ENCODE measurements at regions of chr2 and their contacts with region 1.

Region 1: GRCh38 chr2:224982910-224983711 is 59.2 kb downstream of the DOCK10 start:
- DNase-seq: peak in 1 of 2 donors; percentile 58
- ATAC-seq: peak; percentile 63
- H3K4me3 ChIP-seq: peak overlapping the region; percentile 81 to 94
- H3K27ac ChIP-seq: peak overlapping the region; percentile 88 to 89
- H3K4me1 ChIP-seq: peaks cover 0 to 2% of the 10 kb centered on the region in 2 donors
- H3K27me3 ChIP-seq: no peaks in the 10 kb centered on the region

Region 2: DNA sequence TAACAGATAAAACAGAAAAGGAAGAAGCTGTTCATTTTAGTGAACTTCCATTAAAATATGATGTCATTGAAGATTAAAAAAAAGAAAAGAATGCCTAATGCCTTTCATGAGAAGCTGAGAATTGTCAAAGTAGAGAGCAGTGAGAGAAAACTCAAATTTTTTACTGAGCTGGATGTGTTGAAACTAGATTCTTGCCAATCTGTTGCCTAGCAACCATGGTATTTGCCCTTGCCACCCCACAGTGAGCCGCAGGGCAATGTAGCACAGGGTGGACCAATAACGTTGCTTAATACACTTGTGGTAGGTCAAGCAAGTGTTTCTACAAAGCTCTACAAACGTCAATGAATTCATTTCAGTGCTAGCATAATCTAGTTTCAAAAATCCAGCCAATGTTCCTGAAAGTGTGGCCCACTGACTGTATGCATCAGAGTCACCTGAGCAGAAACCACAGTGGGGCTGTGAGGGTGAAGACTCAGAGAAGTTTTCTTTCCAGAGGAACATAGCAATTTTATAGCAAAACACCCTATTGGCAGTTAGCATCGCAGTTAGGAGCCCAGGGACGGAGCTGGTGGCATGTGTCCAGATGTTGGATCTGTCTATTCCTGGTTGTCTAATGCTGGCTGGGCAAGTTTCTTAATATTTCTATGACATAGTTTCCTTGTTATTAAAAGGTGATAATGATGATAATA is 73.1 kb before region 1 on chr2:
- intact Hi-C with region 1: loop called in 1 of 2 experiments (anchors 5 kb)
- DNase-seq: peak; percentile 76 to 84
- ATAC-seq: peak; percentile 92
- H3K4me3 ChIP-seq: no peak overlapping the region
- H3K27ac ChIP-seq: peak overlapping the region; percentile 85 to 90
- H3K4me1 ChIP-seq: peaks cover 3 to 11% of the 10 kb centered on the region in 2 donors
- H3K27me3 ChIP-seq: no peaks in the 10 kb centered on the region

Region 3: GRCh38 chr2:224927646-224928173 is 55.4 kb before region 1 on chr2:
- intact Hi-C with region 1: loop called in 1 of 2 experiments (anchors 5 kb)
- DNase-seq: no peak
- ATAC-seq: peak; percentile 81
- H3K4me3 ChIP-seq: no peak overlapping the region
- H3K27ac ChIP-seq: peak overlapping the region; percentile 90 to 100
- H3K4me1 ChIP-seq: peaks cover 2 to 28% of the 10 kb centered on the region in 2 donors
- H3K27me3 ChIP-seq: no peaks in the 10 kb centered on the region

Region 4: GRCh38 chr2:224946895-224947294 is 36.2 kb before region 1 on chr2:
- intact Hi-C with region 1: loop called in 1 of 2 experiments (anchors 5 kb)
- DNase-seq: no peak
- ATAC-seq: no peak
- H3K4me3 ChIP-seq: no peak overlapping the region
- H3K27ac ChIP-seq: no peak overlapping the region
- H3K4me1 ChIP-seq: peaks cover 0 to 20% of the 10 kb centered on the region in 2 donors
- H3K27me3 ChIP-seq: no peaks in the 10 kb centered on the region